MCF 10A (cell line): ENCODE measurements at regions of chr6 and their contacts with region 1.

Region 1: GRCh38 chr6:73309769-73310502 is 44.1 kb downstream of the DPPA5 start:
- DNase-seq: peak; percentile 59
- H3K4me3 Mint-ChIP-seq: peak overlapping the region; percentile 98
- H3K27ac Mint-ChIP-seq: peak overlapping the region; percentile 92
- H3K4me1 Mint-ChIP-seq: peaks cover 4% of the 10 kb centered on the region
- H3K27me3 Mint-ChIP-seq: no peaks in the 10 kb centered on the region
- CTCF ChIP-seq: peak; percentile 31

Region 2: GRCh38 chr6:73236147-73236750 is 73.7 kb before region 1 on chr6:
- CTCF ChIA-PET with region 1: interaction called, 3 read pairs
- POLR2A ChIA-PET with region 1: interaction called, 3 read pairs
- intact Hi-C with region 1: loop called (anchors 1 kb)
- DNase-seq: peak; percentile 79
- H3K4me3 Mint-ChIP-seq: no peak overlapping the region
- H3K27ac Mint-ChIP-seq: no peak overlapping the region
- H3K4me1 Mint-ChIP-seq: peaks cover 11% of the 10 kb centered on the region
- H3K27me3 Mint-ChIP-seq: no peaks in the 10 kb centered on the region
- CTCF ChIP-seq: no peak

Region 3: GRCh38 chr6:73258721-73259120 is 51.2 kb before region 1 on chr6:
- CTCF ChIA-PET with region 1: no interaction called
- POLR2A ChIA-PET with region 1: no interaction called
- intact Hi-C with region 1: no loop called
- DNase-seq: no peak
- H3K4me3 Mint-ChIP-seq: no peak overlapping the region
- H3K27ac Mint-ChIP-seq: no peak overlapping the region
- H3K4me1 Mint-ChIP-seq: peaks cover 6% of the 10 kb centered on the region
- H3K27me3 Mint-ChIP-seq: no peaks in the 10 kb centered on the region
- CTCF ChIP-seq: no peak

Region 4: GRCh38 chr6:73285674-73286283 is 24.2 kb before region 1 on chr6:
- CTCF ChIA-PET with region 1: interaction called, 11 read pairs
- POLR2A ChIA-PET with region 1: interaction called, 6 read pairs
- intact Hi-C with region 1: no loop called
- DNase-seq: peak; percentile 63
- H3K4me3 Mint-ChIP-seq: no peak overlapping the region
- H3K27ac Mint-ChIP-seq: no peak overlapping the region
- H3K4me1 Mint-ChIP-seq: peaks cover 6% of the 10 kb centered on the region
- H3K27me3 Mint-ChIP-seq: no peaks in the 10 kb centered on the region
- CTCF ChIP-seq: peak; percentile 35